Naive thymus-derived CD4-positive, alpha-beta T cell (primary cell): ENCODE measurements at regions of chr1 and their contacts with region 1.

Region 1: GRCh38 chr1:89615676-89616598 is 17.0 kb upstream of the LRRC8C start:
- DNase-seq: no peak
- ATAC-seq: peak; percentile 54
- H3K4me3 ChIP-seq: no peak overlapping the region
- H3K4me3 Mint-ChIP-seq: peak overlapping the region in 2 of 10 donors; percentile 23 to 24
- H3K27ac ChIP-seq: no peak overlapping the region
- H3K27ac Mint-ChIP-seq: peak overlapping the region in 8 of 9 donors; percentile 15 to 86 (median 74)
- H3K4me1 ChIP-seq: peaks cover 30 to 42% of the 10 kb centered on the region in 2 donors
- H3K4me1 Mint-ChIP-seq: peaks cover 38 to 95% (median 84%) of the 10 kb centered on the region in 7 donors
- H3K27me3 ChIP-seq: no peaks in the 10 kb centered on the region
- H3K27me3 Mint-ChIP-seq: no peaks in the 10 kb centered on the region

Region 2: GRCh38 chr1:89757532-89757931 is 141.6 kb after region 1 on chr1:
- CTCF ChIA-PET with region 1: interaction called, 34 read pairs
- POLR2A ChIA-PET with region 1: interaction called, 81 read pairs
- intact Hi-C with region 1: no loop called
- DNase-seq: peak in 8 of 9 donors; percentile 30 to 59 (median 51)
- ATAC-seq: peak; percentile 68
- H3K4me3 ChIP-seq: peak overlapping the region; percentile 48
- H3K4me3 Mint-ChIP-seq: peak overlapping the region; percentile 73 to 87 (median 83)
- H3K27ac ChIP-seq: peak overlapping the region; percentile 62
- H3K27ac Mint-ChIP-seq: peak overlapping the region; percentile 88 to 97 (median 95)
- H3K4me1 ChIP-seq: peaks cover 37 to 81% of the 10 kb centered on the region in 2 donors
- H3K4me1 Mint-ChIP-seq: peaks cover 61 to 97% (median 88%) of the 10 kb centered on the region in 7 donors
- H3K27me3 ChIP-seq: no peaks in the 10 kb centered on the region
- H3K27me3 Mint-ChIP-seq: no peaks in the 10 kb centered on the region